CD4-positive, alpha-beta T cell (primary cell): ENCODE measurements at regions of chr2 and their contacts with region 1.

Region 1: DNA sequence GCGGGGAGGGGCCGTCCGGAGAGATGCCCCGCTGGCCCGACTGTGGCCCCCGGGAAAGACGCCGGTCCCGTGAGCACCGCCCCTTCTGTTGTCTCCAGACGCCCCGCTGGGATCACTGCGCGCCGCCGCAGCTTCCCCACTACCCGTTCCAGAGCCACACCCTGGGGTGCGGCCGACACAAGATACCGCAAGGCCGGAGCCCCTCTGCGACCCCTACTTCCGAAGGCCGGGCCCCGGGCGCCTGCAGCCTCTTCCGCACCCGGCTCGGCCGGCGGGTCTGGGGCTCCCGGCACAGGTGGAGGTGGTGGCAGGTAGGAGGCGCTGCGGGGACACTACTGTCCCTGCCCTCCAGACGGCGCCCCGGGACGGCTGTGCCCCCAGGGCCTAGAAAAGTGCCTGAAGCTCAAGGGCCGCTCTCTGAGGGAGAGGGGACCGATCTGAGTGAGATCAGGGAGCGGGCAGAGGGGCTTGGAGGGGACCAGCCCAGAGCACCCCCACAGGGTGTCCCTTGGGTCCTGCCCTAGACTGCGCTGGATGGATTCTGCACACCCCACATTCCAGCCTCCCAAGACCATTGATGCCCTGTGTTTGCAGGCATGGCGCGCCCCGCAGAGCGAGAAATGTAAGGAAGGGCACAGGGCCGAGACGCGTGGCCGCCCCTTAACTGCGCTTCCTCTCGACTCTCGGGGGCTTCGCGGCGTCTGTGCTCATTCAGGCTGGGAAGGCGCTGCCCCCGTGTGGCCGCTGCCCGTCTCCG is 80.0 kb downstream of the GFPT1 start:
- DNase-seq: peak; percentile 30 to 74 (median 46)
- ATAC-seq: peak; percentile 81
- H3K4me3 ChIP-seq: peak overlapping the region; percentile 56
- H3K4me3 Mint-ChIP-seq: peak overlapping the region; percentile 58
- H3K27ac ChIP-seq: no peak overlapping the region
- H3K27ac Mint-ChIP-seq: no peak overlapping the region
- H3K4me1 ChIP-seq: peaks cover 31% of the 10 kb centered on the region
- H3K4me1 Mint-ChIP-seq: peaks cover 31% of the 10 kb centered on the region
- H3K27me3 ChIP-seq: peaks cover 18 to 29% of the 10 kb centered on the region in 2 experiments
- H3K27me3 Mint-ChIP-seq: peaks cover 32% of the 10 kb centered on the region
- CTCF ChIP-seq: peak; percentile 79

Region 2: GRCh38 chr2:69026026-69026425 is 281.0 kb before region 1 on chr2:
- CTCF ChIA-PET with region 1: no interaction called
- POLR2A ChIA-PET with region 1: no interaction called
- intact Hi-C with region 1: loop called in 1 of 2 experiments (anchors 5 kb)
- DNase-seq: peak in 3 of 14 experiments; percentile 16 to 35 (median 28)
- ATAC-seq: no peak
- H3K4me3 ChIP-seq: no peak overlapping the region
- H3K4me3 Mint-ChIP-seq: no peak overlapping the region
- H3K27ac ChIP-seq: no peak overlapping the region
- H3K27ac Mint-ChIP-seq: no peak overlapping the region
- H3K4me1 ChIP-seq: no peaks in the 10 kb centered on the region
- H3K4me1 Mint-ChIP-seq: no peaks in the 10 kb centered on the region
- H3K27me3 ChIP-seq: peaks cover 1 to 13% of the 10 kb centered on the region in 2 experiments
- H3K27me3 Mint-ChIP-seq: peaks cover 26% of the 10 kb centered on the region
- CTCF ChIP-seq: no peak